ENCODE measurements at regions of chr6 and their contacts with region 1.

Region 1: DNA sequence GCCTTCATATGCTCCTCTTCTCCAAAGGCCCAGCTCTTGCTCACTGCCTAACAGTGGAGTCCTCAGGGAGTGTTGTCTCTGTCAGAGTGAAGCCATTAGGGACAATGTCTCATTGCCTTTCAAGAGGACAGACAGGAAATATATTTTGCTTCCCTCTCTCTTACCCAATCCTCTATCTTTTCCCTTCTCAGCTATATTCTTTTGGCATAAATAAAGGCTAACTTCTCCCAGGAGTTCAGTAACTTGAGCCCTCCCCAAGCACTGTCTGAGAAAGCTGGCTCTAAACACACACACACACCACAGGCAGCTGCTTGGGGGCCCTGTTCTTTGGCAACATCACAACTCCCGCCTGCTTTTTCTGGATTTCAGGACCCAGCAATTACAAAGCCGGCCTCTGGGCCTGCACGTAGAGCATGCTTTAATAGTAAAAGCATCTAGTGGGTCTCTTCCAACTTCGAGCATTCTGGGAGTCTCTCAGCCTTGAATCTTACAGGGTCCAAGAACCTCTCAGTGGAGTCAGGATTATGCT is 34.7 kb upstream of the LAMA4 start:
- DNase-seq: no peak
- H3K4me3 Mint-ChIP-seq: no peak overlapping the region
- H3K27ac Mint-ChIP-seq: no peak overlapping the region
- H3K4me1 Mint-ChIP-seq: peaks cover 20% of the 10 kb centered on the region
- H3K27me3 Mint-ChIP-seq: peaks cover 26% of the 10 kb centered on the region

Region 2: GRCh38 chr6:112029045-112029822 is 259.9 kb before region 1 on chr6:
- CTCF ChIA-PET with region 1: no interaction called
- POLR2A ChIA-PET with region 1: no interaction called
- intact Hi-C with region 1: no loop called
- DNase-seq: peak; percentile 86
- H3K4me3 Mint-ChIP-seq: no peak overlapping the region
- H3K27ac Mint-ChIP-seq: peak overlapping the region; percentile 89
- H3K4me1 Mint-ChIP-seq: peaks cover 70% of the 10 kb centered on the region
- H3K27me3 Mint-ChIP-seq: no peaks in the 10 kb centered on the region

Region 3: DNA sequence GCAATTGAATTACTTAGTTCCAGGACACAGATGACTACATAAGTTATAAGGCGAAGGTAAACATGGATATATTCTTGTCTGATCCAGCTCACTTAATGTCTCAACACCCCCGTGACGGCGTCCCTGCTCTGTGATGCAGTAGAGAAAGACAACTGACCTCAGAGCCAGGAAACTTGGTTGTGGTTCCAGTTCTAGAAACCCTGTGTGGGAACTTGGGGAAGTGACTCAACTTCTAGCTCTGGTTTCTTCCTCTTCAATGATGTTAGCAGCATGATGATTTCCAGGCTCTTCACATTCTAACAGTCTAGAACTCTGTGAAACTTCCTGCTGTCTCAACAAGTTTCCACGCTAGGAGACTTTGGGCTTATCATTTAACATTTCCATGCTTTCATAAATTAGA is 53.1 kb before region 1 on chr6:
- CTCF ChIA-PET with region 1: no interaction called
- POLR2A ChIA-PET with region 1: no interaction called
- intact Hi-C with region 1: loop called (anchors 1 kb)
- DNase-seq: peak; percentile 82
- H3K4me3 Mint-ChIP-seq: no peak overlapping the region
- H3K27ac Mint-ChIP-seq: no peak overlapping the region
- H3K4me1 Mint-ChIP-seq: peaks cover 10% of the 10 kb centered on the region
- H3K27me3 Mint-ChIP-seq: peaks cover 21% of the 10 kb centered on the region

Measured in activated CD4-positive, alpha-beta memory T cell treated with anti-CD3 and anti-CD28 coated beads for 36 hours (primary cell).